CD14-positive monocyte (primary cell): ENCODE measurements at regions of chr4 and their contacts with region 1.

Region 1: DNA sequence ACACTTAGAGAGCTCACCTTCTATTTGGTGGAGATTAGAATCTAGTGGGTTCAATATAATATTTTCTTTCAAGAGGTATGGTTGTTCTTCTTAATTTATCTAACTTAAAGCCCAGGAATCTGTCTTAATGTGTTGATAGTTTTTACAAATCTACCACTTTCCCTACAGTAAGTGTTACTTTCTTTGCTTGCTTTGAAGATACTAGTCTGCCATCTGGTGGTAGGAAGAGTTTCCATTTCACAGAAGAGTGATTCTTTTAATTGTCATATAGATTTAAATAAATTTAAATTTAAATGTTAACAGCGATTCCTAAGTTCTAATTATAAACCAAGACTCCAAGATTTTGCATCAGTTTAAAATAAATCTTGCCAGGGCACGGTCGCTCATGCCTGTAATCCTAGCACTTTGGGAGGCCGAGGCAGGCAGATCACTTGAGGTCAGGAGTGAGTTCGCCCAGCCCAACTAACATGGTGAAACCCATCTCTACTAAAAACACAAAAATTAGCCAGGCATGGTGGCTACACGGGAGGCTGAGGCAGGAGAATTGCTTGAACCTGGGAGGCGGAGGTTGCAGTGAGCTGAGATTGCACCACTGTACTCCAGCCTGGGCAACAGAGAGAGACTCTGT is 43.5 kb downstream of the NUDT9 start:
- DNase-seq: peak; percentile 15 to 36 (median 33)
- H3K4me3 ChIP-seq: no peak overlapping the region
- H3K4me3 Mint-ChIP-seq: no peak overlapping the region
- H3K27ac ChIP-seq: no peak overlapping the region
- H3K27ac Mint-ChIP-seq: no peak overlapping the region
- H3K4me1 ChIP-seq: no peaks in the 10 kb centered on the region
- H3K4me1 Mint-ChIP-seq: no peaks in the 10 kb centered on the region
- H3K27me3 ChIP-seq: no peaks in the 10 kb centered on the region
- H3K27me3 Mint-ChIP-seq: peaks cover 0 to 2% (median 0%) of the 10 kb centered on the region in 3 donors
- CTCF ChIP-seq: peak; percentile 76

Region 2: DNA sequence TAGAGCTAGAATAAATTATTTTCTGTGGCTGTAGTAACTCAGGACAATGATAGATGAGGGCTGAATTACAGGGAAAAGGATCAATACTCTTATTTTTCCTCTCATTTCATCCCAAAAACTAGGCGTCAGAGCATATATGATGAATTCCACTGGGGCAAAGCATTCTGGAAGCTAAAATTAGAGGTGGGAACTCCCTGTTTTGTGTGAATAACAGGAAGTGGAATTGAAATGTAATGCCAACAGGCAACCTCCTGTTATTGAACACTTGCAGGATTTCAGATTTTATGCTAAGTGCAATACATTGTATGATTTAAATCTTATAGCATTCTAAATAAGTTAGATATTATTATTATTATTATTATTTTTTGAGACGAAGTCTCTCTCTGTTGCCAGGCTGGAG is 95.8 kb before region 1 on chr4:
- intact Hi-C with region 1: loop called (anchors 5 kb)
- DNase-seq: no peak
- H3K4me3 ChIP-seq: no peak overlapping the region
- H3K4me3 Mint-ChIP-seq: no peak overlapping the region
- H3K27ac ChIP-seq: peak overlapping the region in 1 of 2 donors; percentile 20
- H3K27ac Mint-ChIP-seq: no peak overlapping the region
- H3K4me1 ChIP-seq: peaks cover 0 to 3% of the 10 kb centered on the region in 2 donors
- H3K4me1 Mint-ChIP-seq: no peaks in the 10 kb centered on the region
- H3K27me3 ChIP-seq: no peaks in the 10 kb centered on the region
- H3K27me3 Mint-ChIP-seq: peaks cover 0 to 2% (median 0%) of the 10 kb centered on the region in 3 donors
- CTCF ChIP-seq: no peak

Region 3: DNA sequence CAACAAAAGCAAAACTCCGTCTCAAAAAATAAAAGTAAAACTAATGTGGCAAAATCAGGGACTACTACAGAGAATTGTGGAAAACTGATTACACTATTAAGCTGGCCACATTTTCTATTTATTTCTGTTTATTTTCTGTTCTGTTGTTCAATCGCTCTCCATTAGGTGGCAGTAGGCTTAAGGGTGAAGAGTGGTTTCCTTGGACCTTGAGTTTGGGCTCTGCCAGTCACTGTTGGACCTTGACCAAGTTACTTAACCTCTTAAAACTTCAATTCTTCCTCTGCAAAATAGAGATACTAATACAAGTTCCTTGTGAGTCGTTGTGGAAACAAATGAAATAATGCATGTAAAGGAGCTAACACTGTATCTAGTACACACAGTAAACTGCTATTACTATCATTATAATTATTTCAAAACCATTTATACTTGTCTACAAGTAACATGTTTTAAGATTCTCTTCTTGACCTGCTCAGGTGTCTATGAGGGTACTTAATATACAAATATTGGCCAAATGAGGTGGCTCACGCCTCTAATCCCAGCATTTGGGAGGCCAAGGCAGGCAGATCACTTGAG is 90.0 kb before region 1 on chr4:
- intact Hi-C with region 1: loop called (anchors 5 kb)
- DNase-seq: peak; percentile 36 to 55 (median 55)
- H3K4me3 ChIP-seq: no peak overlapping the region
- H3K4me3 Mint-ChIP-seq: no peak overlapping the region
- H3K27ac ChIP-seq: peak overlapping the region in 1 of 2 donors; percentile 42
- H3K27ac Mint-ChIP-seq: peak overlapping the region in 5 of 7 donors; percentile 11 to 76 (median 37)
- H3K4me1 ChIP-seq: peaks cover 3 to 14% of the 10 kb centered on the region in 2 donors
- H3K4me1 Mint-ChIP-seq: peaks cover 5% of the 10 kb centered on the region
- H3K27me3 ChIP-seq: no peaks in the 10 kb centered on the region
- H3K27me3 Mint-ChIP-seq: no peaks in the 10 kb centered on the region
- CTCF ChIP-seq: peak; percentile 81